Transverse colon (tissue), 4 donors: ENCODE measurements at regions of chr18 and their contacts with region 1.

Region 1: GRCh38 chr18:36529747-36530146 is 232.2 kb downstream of the FHOD3 start:
- DNase-seq: no peak
- H3K4me3 ChIP-seq: no peak overlapping the region
- H3K27ac ChIP-seq: no peak overlapping the region
- H3K4me1 ChIP-seq: no peaks in the 10 kb centered on the region
- H3K27me3 ChIP-seq: no peaks in the 10 kb centered on the region
- CTCF ChIP-seq: no peak
- EP300 ChIP-seq: no peak
- POLR2A ChIP-seq: no peak

Region 2: DNA sequence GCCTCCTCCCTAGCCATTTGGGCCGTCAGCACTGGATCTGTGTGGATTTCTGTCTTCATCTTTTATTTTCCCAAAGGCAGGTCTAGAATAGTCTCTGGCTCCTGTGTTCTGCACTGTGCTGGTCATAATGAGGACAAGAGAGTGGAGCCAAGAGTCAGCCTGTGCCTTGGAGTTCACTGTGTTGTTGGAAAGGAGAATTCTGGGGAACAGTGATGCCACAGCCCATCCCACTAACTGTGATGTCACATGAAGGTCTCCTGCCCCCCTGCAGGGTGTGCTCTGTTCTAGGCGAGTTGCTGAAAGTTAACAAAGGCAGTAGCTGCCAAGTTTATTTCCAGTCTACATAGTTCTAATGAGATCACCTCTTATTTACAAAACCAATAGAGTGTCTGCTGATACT is 50.5 kb after region 1 on chr18:
- in situ Hi-C with region 1: no loop called
- intact Hi-C with region 1: loop called (anchors 1 kb)
- DNase-seq: no peak
- H3K4me3 ChIP-seq: no peak overlapping the region
- H3K27ac ChIP-seq: peak overlapping the region in 1 of 4 donors; percentile 13
- H3K4me1 ChIP-seq: peaks cover 2 to 29% (median 10%) of the 10 kb centered on the region in 4 donors
- H3K27me3 ChIP-seq: no peaks in the 10 kb centered on the region
- CTCF ChIP-seq: no peak
- EP300 ChIP-seq: no peak
- POLR2A ChIP-seq: no peak